Caco-2 (cell line): ENCODE measurements at regions of chr2 and their contacts with region 1.

Region 1: DNA sequence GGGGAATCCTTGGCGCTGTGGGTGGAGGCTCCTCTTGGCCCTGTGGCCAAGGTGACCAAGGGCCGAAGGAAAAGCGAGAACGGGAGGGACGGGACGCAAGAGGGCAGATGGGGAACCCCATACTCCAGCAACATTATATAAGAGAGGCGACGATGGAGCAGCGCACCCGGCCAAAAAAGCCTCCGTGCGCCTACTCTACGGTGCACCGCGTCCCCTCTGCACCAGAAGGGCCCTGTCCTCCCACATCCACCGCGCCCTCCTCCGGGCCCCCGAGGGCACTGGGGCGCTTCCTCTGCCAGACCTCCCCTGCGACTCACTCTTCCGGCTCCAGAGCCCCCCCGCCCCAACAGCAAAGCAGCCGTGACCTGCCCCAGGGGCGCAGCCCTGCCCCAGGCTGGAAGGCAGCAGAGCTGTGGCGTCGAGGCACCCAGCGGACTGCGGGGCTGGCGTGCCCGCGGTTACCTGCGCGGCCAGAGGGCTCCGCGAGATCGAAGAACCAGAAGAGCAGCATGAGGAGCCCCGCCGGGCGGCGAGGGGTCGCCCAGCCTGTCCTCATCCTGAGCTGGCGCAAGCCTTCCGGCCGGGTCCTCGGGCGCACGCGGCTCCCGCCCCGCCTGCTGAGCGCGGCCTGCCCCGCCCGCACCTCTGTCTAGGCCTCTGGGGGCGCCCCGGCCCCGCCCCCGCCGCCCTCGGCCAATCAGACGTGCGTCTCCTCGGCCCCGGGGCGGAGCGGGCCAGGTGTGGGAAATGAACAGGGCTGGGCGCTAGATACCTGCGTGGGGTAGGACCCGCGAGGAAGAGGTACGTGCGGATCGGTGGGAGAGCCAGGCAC is 106.3 kb upstream of the CD302 start:
- DNase-seq: peak; percentile 90
- H3K4me3 ChIP-seq: peak within 1 kb of the TSS; percentile 90
- H3K4me3 Mint-ChIP-seq: peak within 1 kb of the TSS; percentile 78
- H3K27ac Mint-ChIP-seq: peak within 1 kb of the TSS; percentile 70
- H3K4me1 ChIP-seq: peaks cover 44% of the 10 kb centered on the region
- H3K4me1 Mint-ChIP-seq: peaks cover 30% of the 10 kb centered on the region
- H3K27me3 ChIP-seq: no peaks in the 10 kb centered on the region
- H3K27me3 Mint-ChIP-seq: no peaks in the 10 kb centered on the region
- CTCF ChIP-seq: no peak

Region 2: DNA sequence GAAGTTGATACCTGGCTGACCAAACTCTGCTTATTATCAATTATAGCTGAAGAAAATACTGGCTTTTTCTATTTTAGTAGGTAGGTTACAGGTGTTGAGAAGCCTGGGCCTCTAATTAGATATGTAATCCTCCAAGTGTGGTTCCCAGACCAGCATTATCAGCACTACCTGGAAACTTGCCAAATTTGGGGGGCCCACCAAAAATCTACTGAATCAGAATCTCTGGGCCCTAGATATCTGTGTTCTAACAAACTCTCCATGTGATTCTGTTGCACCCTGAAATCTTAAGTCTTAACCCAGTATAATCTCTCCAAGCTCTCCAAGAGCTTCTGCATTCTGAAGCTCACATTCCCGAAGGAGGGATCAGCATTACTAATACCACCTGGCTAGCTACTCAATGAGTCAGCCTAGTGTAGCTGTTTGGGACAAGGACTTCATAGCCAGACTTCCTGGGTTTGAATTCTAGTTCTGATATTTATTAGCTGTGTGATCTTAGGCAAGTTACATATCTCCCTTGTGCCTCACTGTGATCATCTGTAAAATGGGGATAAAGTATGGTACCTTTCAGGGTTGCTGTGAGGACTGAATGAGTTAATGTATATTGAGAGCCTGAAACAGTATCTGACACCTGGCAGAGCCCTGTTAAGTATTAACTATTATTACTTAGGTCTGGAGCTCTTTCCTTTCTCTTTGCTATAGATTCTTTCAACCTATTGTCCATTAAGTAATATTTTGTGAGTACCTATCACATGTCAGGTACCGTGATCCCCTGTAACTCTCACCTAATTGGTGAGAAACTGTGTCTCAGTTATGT is 12.2 kb before region 1 on chr2:
- CTCF ChIA-PET with region 1: no interaction called
- POLR2A ChIA-PET with region 1: interaction called, 3 read pairs
- intact Hi-C with region 1: loop called (anchors 1 kb)
- DNase-seq: no peak
- H3K4me3 ChIP-seq: no peak overlapping the region
- H3K4me3 Mint-ChIP-seq: no peak overlapping the region
- H3K27ac Mint-ChIP-seq: peak overlapping the region; percentile 42
- H3K4me1 ChIP-seq: peaks cover 53% of the 10 kb centered on the region
- H3K4me1 Mint-ChIP-seq: peaks cover 24% of the 10 kb centered on the region
- H3K27me3 ChIP-seq: no peaks in the 10 kb centered on the region
- H3K27me3 Mint-ChIP-seq: no peaks in the 10 kb centered on the region
- CTCF ChIP-seq: no peak

Region 3: DNA sequence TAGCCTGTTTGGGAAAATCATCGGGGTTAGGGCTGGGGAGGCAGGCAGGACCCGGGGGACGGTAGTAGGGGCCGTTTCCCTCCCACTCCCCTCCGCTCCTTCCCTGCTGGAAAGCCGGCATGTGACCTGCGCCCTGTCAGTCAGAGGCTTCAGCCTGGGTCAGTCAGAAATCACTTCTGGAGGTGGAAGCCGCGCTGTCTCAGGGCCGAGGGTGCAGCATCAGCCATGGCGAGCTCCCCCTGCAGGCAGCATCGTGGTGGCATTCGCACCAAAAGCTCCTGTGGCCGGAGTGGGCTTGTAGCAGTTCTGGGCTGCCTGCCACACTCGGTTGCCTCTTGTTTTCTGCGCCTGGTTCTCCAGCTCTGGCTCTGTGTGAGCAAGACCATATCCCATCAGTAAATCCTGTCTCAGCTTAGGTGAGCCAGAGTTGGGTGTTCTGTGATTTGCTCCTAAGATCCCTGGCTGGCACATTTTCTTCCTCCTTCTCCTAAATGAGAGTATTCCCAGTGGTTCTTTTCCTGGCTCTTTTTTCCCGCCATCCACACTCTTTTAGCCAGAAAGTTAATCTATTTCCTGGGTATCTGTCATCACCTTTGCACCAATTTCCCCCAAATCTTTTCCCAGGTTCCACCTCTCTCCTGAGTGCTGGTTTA is 17.5 kb after region 1 on chr2:
- CTCF ChIA-PET with region 1: interaction called, 9 read pairs
- POLR2A ChIA-PET with region 1: interaction called, 5 read pairs
- intact Hi-C with region 1: loop called (anchors 2 kb)
- DNase-seq: peak; percentile 83 to 85
- H3K4me3 ChIP-seq: no peak overlapping the region
- H3K4me3 Mint-ChIP-seq: no peak overlapping the region
- H3K27ac Mint-ChIP-seq: no peak overlapping the region
- H3K4me1 ChIP-seq: no peaks in the 10 kb centered on the region
- H3K4me1 Mint-ChIP-seq: peaks cover 12% of the 10 kb centered on the region
- H3K27me3 ChIP-seq: no peaks in the 10 kb centered on the region
- H3K27me3 Mint-ChIP-seq: no peaks in the 10 kb centered on the region
- CTCF ChIP-seq: peak; percentile 78 to 96

Region 4: DNA sequence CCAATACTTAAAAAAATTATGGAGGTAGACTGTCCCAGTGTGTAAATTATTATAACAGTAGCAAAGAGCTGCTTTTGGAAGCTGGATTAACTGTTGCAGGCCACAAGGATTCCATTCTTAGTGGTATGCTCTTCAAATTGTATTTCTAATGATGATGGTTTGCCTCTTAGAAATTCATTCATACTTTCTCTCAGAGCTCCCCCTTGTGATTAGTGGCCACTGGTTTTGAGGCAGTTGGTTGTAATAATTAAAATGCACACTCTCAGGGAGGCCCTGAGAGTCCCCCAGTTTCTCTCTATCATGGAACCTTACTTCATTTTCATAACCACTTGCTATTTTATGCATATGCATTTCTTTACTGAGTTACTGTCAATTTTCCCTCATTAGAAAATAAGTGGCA is 35.6 kb after region 1 on chr2:
- CTCF ChIA-PET with region 1: interaction called, 3 read pairs
- POLR2A ChIA-PET with region 1: no interaction called
- intact Hi-C with region 1: loop called (anchors 2 kb)
- DNase-seq: peak in 1 of 2 experiments; percentile 52
- H3K4me3 ChIP-seq: no peak overlapping the region
- H3K4me3 Mint-ChIP-seq: no peak overlapping the region
- H3K27ac Mint-ChIP-seq: no peak overlapping the region
- H3K4me1 ChIP-seq: 0 out of 2 replicates have a peak, but pooled peaks cover 3% of the 10 kb centered on the region
- H3K4me1 Mint-ChIP-seq: no peaks in the 10 kb centered on the region
- H3K27me3 ChIP-seq: no peaks in the 10 kb centered on the region
- H3K27me3 Mint-ChIP-seq: no peaks in the 10 kb centered on the region
- CTCF ChIP-seq: peak; percentile 52 to 57

Region 5: DNA sequence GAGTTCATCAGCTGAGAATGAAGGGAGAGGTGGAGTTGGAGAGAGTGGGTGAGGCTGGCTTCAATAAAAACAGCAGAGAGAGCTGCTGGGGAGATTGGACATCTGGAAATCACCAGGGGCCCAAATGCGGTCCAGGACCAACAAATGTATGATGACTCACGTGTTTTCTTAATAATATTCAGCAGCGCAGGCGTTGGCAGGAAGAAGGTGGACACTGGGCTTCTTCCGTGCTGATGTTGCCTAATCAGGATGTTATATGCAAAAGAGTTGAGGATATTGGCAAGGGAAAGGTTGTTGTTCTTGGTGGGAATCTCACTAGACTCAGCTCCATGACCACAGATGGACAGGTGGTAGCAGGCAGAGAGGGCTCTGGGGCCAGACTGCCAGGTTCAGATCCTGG is 170.8 kb after region 1 on chr2:
- CTCF ChIA-PET with region 1: no interaction called
- POLR2A ChIA-PET with region 1: no interaction called
- intact Hi-C with region 1: no loop called
- DNase-seq: no peak
- H3K4me3 ChIP-seq: no peak overlapping the region
- H3K4me3 Mint-ChIP-seq: no peak overlapping the region
- H3K27ac Mint-ChIP-seq: no peak overlapping the region
- H3K4me1 ChIP-seq: peaks cover 3% of the 10 kb centered on the region; the same call in 1 of the 2 replicates
- H3K4me1 Mint-ChIP-seq: no peaks in the 10 kb centered on the region
- H3K27me3 ChIP-seq: no peaks in the 10 kb centered on the region
- H3K27me3 Mint-ChIP-seq: no peaks in the 10 kb centered on the region
- CTCF ChIP-seq: no peak

Region 6: DNA sequence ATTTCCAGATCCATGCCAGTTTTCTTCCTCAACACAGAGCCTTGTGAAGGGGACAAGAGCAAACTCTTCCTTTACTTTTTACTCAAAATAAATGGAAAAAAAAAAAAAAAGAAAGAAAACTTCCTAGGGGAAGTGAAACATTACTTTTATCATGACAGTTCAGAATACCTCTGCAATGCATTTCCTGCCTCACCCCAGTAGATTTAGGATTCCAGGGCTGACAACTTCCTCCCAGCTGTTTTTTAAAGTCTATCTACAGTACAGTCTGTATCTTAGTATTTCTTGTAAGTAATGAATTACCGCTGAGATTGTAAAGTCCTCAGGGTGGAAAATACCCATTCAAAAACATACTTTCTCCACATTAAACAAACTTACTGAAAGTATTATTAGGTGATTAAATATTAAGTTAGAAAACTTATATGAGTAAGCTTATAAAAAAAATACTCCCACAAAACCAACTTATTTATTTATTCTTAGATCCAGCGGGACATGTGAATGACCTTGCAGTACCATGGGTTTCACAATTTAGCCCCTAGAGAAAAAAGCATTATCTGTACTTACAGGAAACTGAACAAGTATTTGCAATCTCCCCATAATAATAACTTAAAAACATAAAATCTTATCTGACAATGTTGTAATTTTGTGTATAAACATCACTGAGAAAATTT is 471.6 kb after region 1 on chr2:
- CTCF ChIA-PET with region 1: no interaction called
- POLR2A ChIA-PET with region 1: no interaction called
- intact Hi-C with region 1: no loop called
- DNase-seq: no peak
- H3K4me3 ChIP-seq: no peak overlapping the region
- H3K4me3 Mint-ChIP-seq: no peak overlapping the region
- H3K27ac Mint-ChIP-seq: no peak overlapping the region
- H3K4me1 ChIP-seq: 0 out of 2 replicates have a peak, but pooled peaks cover 6% of the 10 kb centered on the region
- H3K4me1 Mint-ChIP-seq: peaks cover 21% of the 10 kb centered on the region
- H3K27me3 ChIP-seq: no peaks in the 10 kb centered on the region
- H3K27me3 Mint-ChIP-seq: no peaks in the 10 kb centered on the region
- CTCF ChIP-seq: no peak